MCF 10A (cell line): ENCODE measurements at regions of chr5 and their contacts with region 1.

Region 1: DNA sequence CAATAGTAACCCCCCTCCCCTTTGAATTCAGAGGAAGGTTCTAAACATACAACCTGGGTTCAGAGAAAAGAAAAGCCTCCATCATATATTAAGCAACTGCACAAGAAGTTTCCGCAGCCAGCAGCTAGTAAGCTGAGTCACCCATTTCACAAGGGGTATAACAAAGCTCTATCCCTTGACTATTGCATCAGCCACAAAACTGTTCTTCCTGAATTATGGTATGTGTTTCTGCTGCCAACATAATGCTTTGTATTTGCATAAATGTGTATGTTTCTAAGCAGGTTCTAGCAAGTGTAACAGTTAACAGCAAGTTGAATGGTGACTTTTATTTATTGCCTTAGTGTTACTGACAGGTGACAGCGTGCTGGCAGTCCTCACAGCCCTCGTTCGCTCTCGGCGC is 6.8 kb upstream of the CEP120 start:
- DNase-seq: peak; percentile 99
- H3K4me3 Mint-ChIP-seq: peak overlapping the region; percentile 7
- H3K27ac Mint-ChIP-seq: peak overlapping the region; percentile 75
- H3K4me1 Mint-ChIP-seq: peaks cover 13% of the 10 kb centered on the region
- H3K27me3 Mint-ChIP-seq: no peaks in the 10 kb centered on the region
- CTCF ChIP-seq: no peak

Region 2: DNA sequence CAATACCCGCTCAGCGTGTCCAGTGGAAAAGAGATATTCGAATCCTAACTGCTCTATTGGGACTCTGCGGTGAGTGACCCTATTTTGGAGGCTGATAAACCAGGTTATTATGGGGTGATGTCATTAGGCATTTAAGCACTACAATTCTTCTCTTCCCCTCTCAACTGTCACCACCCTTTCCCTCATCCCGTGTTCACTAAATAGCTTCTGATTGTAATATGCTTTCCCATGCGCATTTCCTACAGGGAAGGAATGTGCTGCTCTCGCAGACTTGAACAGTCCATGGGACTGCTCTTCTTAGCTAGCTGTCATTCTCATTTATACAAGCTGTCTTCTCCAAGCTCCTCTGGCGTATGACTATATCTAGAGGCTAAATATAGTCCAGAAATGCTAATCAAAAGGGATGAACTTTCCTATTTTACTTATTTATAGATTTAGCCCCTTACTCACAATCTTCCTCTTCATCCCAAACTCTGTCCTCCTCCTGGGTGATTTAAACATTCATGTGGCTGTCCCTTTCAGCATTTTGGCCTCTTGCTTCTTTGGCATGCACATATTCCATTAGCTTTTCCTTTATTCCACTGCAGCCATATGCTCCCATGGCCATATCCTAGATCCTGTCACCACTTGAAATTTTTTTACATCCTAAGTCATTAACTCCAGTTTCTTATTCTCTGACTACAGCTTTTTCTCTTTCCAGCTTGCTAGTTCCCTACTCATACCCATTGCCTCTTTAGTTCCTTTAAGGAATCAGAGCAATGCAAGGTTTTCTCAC is 42.3 kb after region 1 on chr5:
- CTCF ChIA-PET with region 1: no interaction called
- POLR2A ChIA-PET with region 1: no interaction called
- intact Hi-C with region 1: no loop called
- DNase-seq: no peak
- H3K4me3 Mint-ChIP-seq: no peak overlapping the region
- H3K27ac Mint-ChIP-seq: no peak overlapping the region
- H3K4me1 Mint-ChIP-seq: peaks cover 11% of the 10 kb centered on the region
- H3K27me3 Mint-ChIP-seq: no peaks in the 10 kb centered on the region
- CTCF ChIP-seq: no peak

Region 3: DNA sequence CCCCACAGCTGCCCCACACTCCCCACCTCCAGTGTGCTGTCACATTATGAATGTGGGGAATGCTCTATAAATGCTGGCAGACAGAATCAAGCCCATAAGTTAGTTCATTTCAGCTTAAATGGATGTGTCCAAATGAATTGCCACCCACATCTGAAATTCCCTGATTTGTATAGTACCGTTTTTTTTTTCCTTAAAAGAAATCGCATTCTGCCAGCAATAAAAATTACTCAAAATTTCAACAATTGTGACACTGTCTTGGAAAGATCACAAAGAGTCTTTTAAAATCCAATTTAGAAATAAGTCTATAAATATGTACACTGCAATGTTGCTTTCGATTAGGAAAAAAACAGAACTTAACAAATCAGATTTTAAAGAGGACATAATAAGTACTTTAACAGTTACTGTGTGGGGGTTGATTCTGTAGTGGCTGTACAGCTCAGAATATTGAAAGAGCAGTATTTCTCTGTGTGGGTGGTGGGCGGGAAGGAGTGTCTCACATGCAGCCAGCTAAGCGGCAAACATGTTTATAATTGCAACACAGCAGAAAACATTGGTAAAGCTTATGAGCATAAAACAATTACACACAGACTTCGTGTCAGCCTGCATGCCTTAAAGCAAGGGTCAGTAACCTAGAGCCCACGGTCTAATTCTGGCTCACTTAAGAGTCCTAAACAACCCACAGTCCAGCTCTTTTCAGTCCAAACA is 57.1 kb after region 1 on chr5:
- CTCF ChIA-PET with region 1: interaction called, 9 read pairs
- POLR2A ChIA-PET with region 1: interaction called, 43 read pairs
- intact Hi-C with region 1: no loop called
- DNase-seq: peak; percentile 72
- H3K4me3 Mint-ChIP-seq: peak overlapping the region; percentile 45
- H3K27ac Mint-ChIP-seq: peak overlapping the region; percentile 72
- H3K4me1 Mint-ChIP-seq: peaks cover 24% of the 10 kb centered on the region
- H3K27me3 Mint-ChIP-seq: no peaks in the 10 kb centered on the region
- CTCF ChIP-seq: no peak